ENCODE measurements at regions of chr5 and their contacts with region 1.

Region 1: GRCh38 chr5:91787718-91788117 is 404.6 kb upstream of the ARRDC3 start:
- DNase-seq: peak in 1 of 2 experiments; percentile 94
- H3K4me3 ChIP-seq: no peak overlapping the region
- H3K27ac ChIP-seq: peak overlapping the region; percentile 28; the same call in 1 of the 2 replicates
- H3K4me1 ChIP-seq: peaks cover 22% of the 10 kb centered on the region
- H3K27me3 ChIP-seq: no peaks in the 10 kb centered on the region
- CTCF ChIP-seq: no peak

Region 2: GRCh38 chr5:90983148-90983547 is 804.6 kb before region 1 on chr5:
- CTCF ChIA-PET with region 1: no interaction called
- POLR2A ChIA-PET with region 1: no interaction called
- intact Hi-C with region 1: no loop called
- DNase-seq: peak; percentile 11 to 74
- H3K4me3 ChIP-seq: no peak overlapping the region
- H3K27ac ChIP-seq: no peak overlapping the region
- H3K4me1 ChIP-seq: peaks cover 17% of the 10 kb centered on the region; the same call in 1 of the 2 replicates
- H3K27me3 ChIP-seq: no peaks in the 10 kb centered on the region
- CTCF ChIP-seq: no peak

Region 3: DNA sequence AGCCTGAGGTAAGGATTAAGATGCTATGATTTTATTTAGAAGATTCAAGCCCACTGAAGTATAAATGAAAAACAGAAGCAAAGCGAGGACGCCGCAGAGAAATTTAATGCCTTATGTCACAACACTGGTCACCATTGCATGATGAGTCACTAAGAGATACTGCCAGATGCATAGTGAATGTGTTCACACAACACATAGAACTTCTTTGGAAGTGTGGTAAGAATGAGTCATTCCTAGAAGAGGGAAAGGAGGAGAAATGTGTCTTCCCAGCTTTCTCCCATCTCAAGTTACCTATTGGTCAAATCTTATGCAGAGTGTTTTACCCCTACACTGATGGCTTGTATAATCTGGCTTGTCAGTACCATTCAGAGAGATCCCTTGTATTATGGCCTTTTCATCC is 60.7 kb after region 1 on chr5:
- CTCF ChIA-PET with region 1: no interaction called
- POLR2A ChIA-PET with region 1: no interaction called
- intact Hi-C with region 1: loop called (anchors 10 kb)
- DNase-seq: peak; percentile 31 to 73
- H3K4me3 ChIP-seq: no peak overlapping the region
- H3K27ac ChIP-seq: peak overlapping the region; percentile 4; the same call in 1 of the 2 replicates
- H3K4me1 ChIP-seq: 0 out of 2 replicates have a peak, but pooled peaks cover 8% of the 10 kb centered on the region
- H3K27me3 ChIP-seq: no peaks in the 10 kb centered on the region
- CTCF ChIP-seq: no peak

Region 4: GRCh38 chr5:92086059-92086811 is 298.5 kb after region 1 on chr5:
- CTCF ChIA-PET with region 1: no interaction called
- POLR2A ChIA-PET with region 1: no interaction called
- intact Hi-C with region 1: no loop called
- DNase-seq: no peak
- H3K4me3 ChIP-seq: no peak overlapping the region
- H3K27ac ChIP-seq: no peak overlapping the region
- H3K4me1 ChIP-seq: no peaks in the 10 kb centered on the region
- H3K27me3 ChIP-seq: no peaks in the 10 kb centered on the region
- CTCF ChIP-seq: no peak

Measured in PC-9 (cell line).